ENCODE measurements at regions of chr6 and their contacts with region 1.

Region 1: DNA sequence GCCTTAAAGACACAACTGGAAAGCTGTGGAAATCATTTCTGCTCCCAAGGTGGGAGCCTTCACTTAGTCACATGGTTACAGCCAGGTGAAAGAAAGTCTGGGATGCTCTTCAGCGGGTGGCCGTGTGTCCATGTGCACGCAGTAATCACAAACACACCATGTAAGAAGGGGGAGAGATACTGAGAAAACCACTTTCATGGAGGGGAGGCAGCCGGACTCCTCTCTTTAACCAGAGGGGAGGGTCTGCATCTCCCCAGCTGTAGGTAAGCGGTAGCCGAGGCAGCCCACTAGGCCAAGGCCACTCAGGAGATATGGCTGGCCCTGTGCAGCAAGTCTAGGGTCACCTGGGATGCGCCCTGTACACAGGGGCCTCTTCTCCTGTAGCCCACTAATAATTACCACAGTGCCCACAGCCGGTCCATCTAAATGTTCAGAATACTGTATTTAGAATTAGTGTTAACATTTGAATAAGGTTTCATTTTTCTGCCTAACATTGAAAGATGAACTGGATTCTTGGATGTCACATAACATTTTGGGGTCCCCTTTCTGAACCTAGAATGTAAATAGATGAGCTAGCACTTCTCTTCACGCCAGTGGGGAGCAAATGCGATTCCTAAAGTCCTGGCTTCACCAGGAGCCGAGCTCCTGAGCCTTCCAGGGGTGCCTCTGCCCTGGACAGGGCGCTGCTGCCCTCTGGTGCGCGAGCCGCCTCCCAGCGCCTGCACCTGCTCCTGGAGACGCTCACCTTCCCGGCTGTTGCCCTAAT is 15.9 kb downstream of the GPR31 start:
- DNase-seq: peak; percentile 77
- ATAC-seq: peak; percentile 61
- H3K4me3 ChIP-seq: no peak overlapping the region
- H3K4me3 Mint-ChIP-seq: peak overlapping the region; percentile 62
- H3K27ac ChIP-seq: peak overlapping the region; percentile 50 to 68
- H3K27ac Mint-ChIP-seq: peak overlapping the region; percentile 92
- H3K4me1 ChIP-seq: peaks cover 32 to 39% of the 10 kb centered on the region in 2 donors
- H3K4me1 Mint-ChIP-seq: peaks cover 61% of the 10 kb centered on the region
- H3K27me3 ChIP-seq: no peaks in the 10 kb centered on the region
- H3K27me3 Mint-ChIP-seq: no peaks in the 10 kb centered on the region
- CTCF ChIP-seq: peak; percentile 98

Region 2: DNA sequence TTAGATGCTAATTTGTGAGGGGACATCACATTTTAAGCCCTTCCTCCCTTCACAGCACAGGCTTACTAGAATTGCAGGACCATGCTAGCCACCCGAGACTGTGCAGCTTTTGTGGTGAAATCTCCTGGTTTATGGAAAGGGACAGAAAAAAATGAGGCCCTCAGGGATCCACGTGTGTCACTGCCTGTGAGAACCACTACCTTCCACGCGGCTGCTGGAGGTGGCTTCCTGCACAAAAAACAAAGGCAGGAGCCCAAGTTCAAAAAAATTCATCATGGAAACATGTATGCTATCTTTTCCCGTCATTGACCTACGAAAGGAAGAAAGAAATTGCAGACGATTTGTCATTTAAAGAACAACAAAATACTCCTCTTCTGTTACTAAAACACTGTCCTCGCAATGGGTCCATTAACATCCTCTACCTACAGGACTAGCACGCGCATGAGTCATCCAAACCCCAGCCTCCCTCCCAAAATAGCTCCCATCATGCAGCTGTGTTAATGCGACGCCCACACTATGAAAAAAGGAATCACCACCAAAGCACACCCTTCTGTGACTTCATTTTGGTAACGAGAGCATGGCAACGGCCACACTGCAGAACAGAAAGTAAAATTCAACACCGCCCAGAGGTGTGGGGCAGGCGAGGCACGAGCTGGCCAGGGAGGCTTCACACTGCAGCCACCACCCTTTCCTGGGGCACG is 601.1 kb before region 1 on chr6:
- CTCF ChIA-PET with region 1: no interaction called
- POLR2A ChIA-PET with region 1: no interaction called
- intact Hi-C with region 1: no loop called
- DNase-seq: peak; percentile 59
- ATAC-seq: peak; percentile 85
- H3K4me3 ChIP-seq: peak overlapping the region in 4 of 5 experiments; percentile 25 to 55 (median 42)
- H3K4me3 Mint-ChIP-seq: peak overlapping the region; percentile 83
- H3K27ac ChIP-seq: peak overlapping the region; percentile 59 to 73
- H3K27ac Mint-ChIP-seq: peak overlapping the region; percentile 90
- H3K4me1 ChIP-seq: peaks cover 5 to 18% of the 10 kb centered on the region in 2 donors
- H3K4me1 Mint-ChIP-seq: peaks cover 22% of the 10 kb centered on the region
- H3K27me3 ChIP-seq: no peaks in the 10 kb centered on the region
- H3K27me3 Mint-ChIP-seq: no peaks in the 10 kb centered on the region
- CTCF ChIP-seq: no peak

Region 3: GRCh38 chr6:166786704-166787293 is 355.1 kb before region 1 on chr6:
- CTCF ChIA-PET with region 1: interaction called, 35 read pairs
- POLR2A ChIA-PET with region 1: no interaction called
- intact Hi-C with region 1: loop called (anchors 1 kb)
- DNase-seq: peak; percentile 80
- ATAC-seq: peak; percentile 54
- H3K4me3 ChIP-seq: no peak overlapping the region
- H3K4me3 Mint-ChIP-seq: no peak overlapping the region
- H3K27ac ChIP-seq: no peak overlapping the region
- H3K27ac Mint-ChIP-seq: no peak overlapping the region
- H3K4me1 ChIP-seq: no peaks in the 10 kb centered on the region
- H3K4me1 Mint-ChIP-seq: no peaks in the 10 kb centered on the region
- H3K27me3 ChIP-seq: no peaks in the 10 kb centered on the region
- H3K27me3 Mint-ChIP-seq: no peaks in the 10 kb centered on the region
- CTCF ChIP-seq: peak; percentile 88

Region 4: GRCh38 chr6:166989427-166990032 is 152.3 kb before region 1 on chr6:
- CTCF ChIA-PET with region 1: interaction called, 119 read pairs
- POLR2A ChIA-PET with region 1: no interaction called
- intact Hi-C with region 1: loop called (anchors 1 kb)
- DNase-seq: peak; percentile 74
- ATAC-seq: peak; percentile 86
- H3K4me3 ChIP-seq: no peak overlapping the region
- H3K4me3 Mint-ChIP-seq: no peak overlapping the region
- H3K27ac ChIP-seq: no peak overlapping the region
- H3K27ac Mint-ChIP-seq: peak overlapping the region; percentile 0
- H3K4me1 ChIP-seq: no peaks in the 10 kb centered on the region
- H3K4me1 Mint-ChIP-seq: peaks cover 7% of the 10 kb centered on the region
- H3K27me3 ChIP-seq: no peaks in the 10 kb centered on the region
- H3K27me3 Mint-ChIP-seq: no peaks in the 10 kb centered on the region
- CTCF ChIP-seq: peak; percentile 78

Region 5: DNA sequence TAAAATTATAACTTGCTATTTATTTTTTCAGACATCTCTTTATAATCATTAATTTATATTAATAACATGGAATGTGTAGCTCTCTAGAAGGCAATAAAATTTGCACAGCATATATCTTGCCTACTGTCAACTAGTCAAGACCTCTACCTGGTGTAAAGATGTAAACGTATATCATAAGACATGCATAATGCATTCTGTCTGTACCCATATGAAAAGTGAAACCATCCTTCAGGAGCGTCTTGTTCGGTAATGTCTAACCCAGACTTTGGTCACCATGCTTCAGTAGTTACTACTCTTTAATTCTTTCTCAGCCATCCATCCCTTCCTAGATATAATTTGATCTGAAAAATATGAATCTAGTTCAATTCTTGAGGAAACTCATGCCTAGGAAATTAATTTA is 121.6 kb before region 1 on chr6:
- CTCF ChIA-PET with region 1: interaction called, 19 read pairs
- POLR2A ChIA-PET with region 1: no interaction called
- intact Hi-C with region 1: loop called (anchors 1 kb)
- DNase-seq: peak; percentile 46
- ATAC-seq: peak; percentile 64
- H3K4me3 ChIP-seq: peak overlapping the region in 2 of 5 experiments; percentile 25 to 33
- H3K4me3 Mint-ChIP-seq: peak overlapping the region; percentile 74
- H3K27ac ChIP-seq: no peak overlapping the region
- H3K27ac Mint-ChIP-seq: peak overlapping the region; percentile 22
- H3K4me1 ChIP-seq: no peaks in the 10 kb centered on the region
- H3K4me1 Mint-ChIP-seq: peaks cover 7% of the 10 kb centered on the region
- H3K27me3 ChIP-seq: no peaks in the 10 kb centered on the region
- H3K27me3 Mint-ChIP-seq: no peaks in the 10 kb centered on the region
- CTCF ChIP-seq: no peak

Region 6: DNA sequence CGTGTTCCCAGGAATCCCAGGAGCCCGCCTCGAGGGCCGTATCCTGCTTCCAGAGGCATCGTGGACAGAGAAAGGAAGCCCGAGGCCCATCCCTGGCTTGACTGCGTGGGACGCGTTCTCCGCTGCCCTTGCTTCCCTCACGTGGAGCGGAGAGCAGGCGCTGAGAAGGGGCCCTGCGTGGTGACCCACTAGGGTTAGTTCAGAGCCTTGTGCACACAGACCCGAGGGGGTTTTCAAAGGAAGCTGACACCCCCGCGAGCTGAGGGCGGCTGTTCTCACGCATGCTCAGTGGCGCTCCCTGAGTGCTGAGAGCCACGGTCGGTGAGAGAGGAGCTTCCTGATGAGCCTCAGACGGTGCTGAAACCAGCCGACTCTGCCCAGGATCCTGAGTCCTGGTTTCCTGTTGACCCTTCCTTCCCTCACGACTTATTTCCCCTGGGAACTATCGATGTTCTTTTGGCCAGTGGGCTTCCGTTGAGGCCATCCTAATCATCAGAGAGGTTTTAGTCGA is 47.9 kb before region 1 on chr6:
- CTCF ChIA-PET with region 1: interaction called, 119 read pairs
- POLR2A ChIA-PET with region 1: interaction called, 12 read pairs
- intact Hi-C with region 1: no loop called
- DNase-seq: peak; percentile 94
- ATAC-seq: peak; percentile 48
- H3K4me3 ChIP-seq: peak overlapping the region; percentile 13 to 80 (median 64)
- H3K4me3 Mint-ChIP-seq: peak overlapping the region; percentile 94
- H3K27ac ChIP-seq: peak overlapping the region; percentile 98 to 99
- H3K27ac Mint-ChIP-seq: peak overlapping the region; percentile 98
- H3K4me1 ChIP-seq: peaks cover 99% of the 10 kb centered on the region in 2 donors
- H3K4me1 Mint-ChIP-seq: peaks cover 93% of the 10 kb centered on the region
- H3K27me3 ChIP-seq: no peaks in the 10 kb centered on the region
- H3K27me3 Mint-ChIP-seq: no peaks in the 10 kb centered on the region
- CTCF ChIP-seq: no peak

Region 7: DNA sequence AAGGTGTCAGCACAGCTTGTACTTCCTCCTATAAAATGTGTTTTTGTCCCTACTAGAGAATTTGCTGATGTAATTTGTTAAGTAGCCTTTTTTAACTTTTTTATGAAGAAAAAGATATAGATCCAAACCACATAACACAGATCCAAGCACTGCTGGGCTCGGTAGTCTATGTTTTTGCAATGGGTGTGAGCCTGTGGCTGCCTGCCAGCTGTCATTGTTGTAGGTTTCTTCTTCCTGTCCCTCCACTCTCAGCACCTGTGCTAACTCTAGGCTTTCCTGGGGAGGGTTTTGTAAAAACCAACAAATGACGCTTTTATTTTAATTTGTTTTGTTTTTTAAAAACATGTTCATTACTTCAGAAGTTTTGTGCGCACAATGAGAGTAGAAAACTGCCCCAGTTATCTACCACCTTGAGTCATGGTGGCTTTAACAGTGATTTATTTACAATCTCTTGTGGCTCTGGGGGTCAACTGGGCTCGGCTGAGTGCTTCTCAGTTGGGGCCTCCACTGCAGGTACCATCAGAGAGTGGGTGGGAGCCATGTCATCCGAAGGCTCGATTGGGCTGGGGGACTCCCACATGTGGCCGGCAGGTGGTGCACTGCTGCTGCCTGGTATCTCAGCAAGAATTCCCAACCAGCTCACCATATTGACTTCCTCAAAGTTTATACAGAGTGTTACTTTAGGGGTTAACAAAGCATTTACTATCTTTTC is 22.0 kb before region 1 on chr6:
- CTCF ChIA-PET with region 1: interaction called, 437 read pairs
- POLR2A ChIA-PET with region 1: interaction called, 21 read pairs
- intact Hi-C with region 1: no loop called
- DNase-seq: peak; percentile 65
- ATAC-seq: no peak
- H3K4me3 ChIP-seq: peak overlapping the region; percentile 2 to 88 (median 15)
- H3K4me3 Mint-ChIP-seq: peak overlapping the region; percentile 96
- H3K27ac ChIP-seq: peak overlapping the region; percentile 97 to 98
- H3K27ac Mint-ChIP-seq: peak overlapping the region; percentile 100
- H3K4me1 ChIP-seq: peaks cover 71 to 84% of the 10 kb centered on the region in 2 donors
- H3K4me1 Mint-ChIP-seq: peaks cover 85% of the 10 kb centered on the region
- H3K27me3 ChIP-seq: no peaks in the 10 kb centered on the region
- H3K27me3 Mint-ChIP-seq: no peaks in the 10 kb centered on the region
- CTCF ChIP-seq: peak; percentile 41

Measured in B cell (primary cell).